HepG2 (cell line): ENCODE measurements at regions of chr2 and their contacts with region 1.

Region 1: DNA sequence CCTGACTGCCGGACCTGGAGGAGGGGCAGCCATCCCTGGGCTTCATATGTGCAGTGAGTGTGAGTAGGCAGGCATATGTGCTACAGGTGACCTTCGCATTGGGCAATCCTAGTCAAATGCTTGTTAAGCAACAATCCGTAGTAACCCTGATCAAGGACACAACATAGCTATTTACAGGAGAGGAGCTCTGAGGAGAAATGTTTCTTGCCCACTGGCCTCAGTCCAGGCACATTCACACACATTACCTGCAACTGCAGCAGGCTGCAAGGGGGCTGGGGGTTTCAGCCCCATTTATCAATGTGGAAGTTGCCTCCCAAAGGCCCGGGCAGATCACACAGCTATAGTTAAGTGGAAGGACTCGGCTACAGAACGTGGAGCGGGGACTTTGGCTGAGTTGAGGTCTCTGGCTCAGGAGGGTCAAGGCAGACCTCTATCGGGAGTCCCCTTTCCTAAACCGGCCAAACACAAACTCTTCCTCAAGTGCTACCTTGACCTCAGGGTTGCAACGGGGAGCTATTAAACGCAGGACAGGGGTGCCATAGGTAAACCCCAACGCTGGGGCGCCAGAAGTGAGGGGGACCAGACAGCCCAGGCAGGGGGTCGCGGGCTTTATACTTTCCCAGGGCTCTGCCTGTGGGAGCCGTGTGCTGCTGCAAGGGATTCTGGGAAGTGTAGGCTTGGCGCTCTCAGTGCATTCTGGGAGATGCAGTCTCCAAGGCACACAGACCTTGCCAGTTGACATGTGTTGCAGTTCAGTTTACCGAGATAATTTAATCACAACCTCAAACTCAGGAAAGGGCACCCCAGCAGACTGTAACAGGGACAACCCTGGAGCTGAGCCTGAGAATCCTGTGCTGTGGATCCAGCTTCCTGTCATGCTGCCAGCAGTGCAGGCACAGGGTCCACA is 9.4 kb downstream of the KHK start:
- DNase-seq: peak; percentile 97
- ATAC-seq: peak; percentile 64
- H3K4me3 ChIP-seq: peak overlapping the region; percentile 33 to 61 (median 35); a peak in 5 of 6 replicates
- H3K27ac ChIP-seq: peak overlapping the region; percentile 97
- H3K4me1 ChIP-seq: peaks cover 62% of the 10 kb centered on the region
- H3K27me3 ChIP-seq: no peaks in the 10 kb centered on the region
- CTCF ChIP-seq: peak; percentile 22
- EP300 ChIP-seq: peak; percentile 88 to 89
- POLR2A ChIP-seq: 0 out of 4 replicates have a peak, but pooled peaks of 1 of the 2 experiments have one; percentile 30
- RAD21 ChIP-seq: peak; percentile 47; the same call in 1 of the 2 replicates

Region 2: GRCh38 chr2:26569216-26570082 is 526.5 kb before region 1 on chr2:
- CTCF ChIA-PET with region 1: no interaction called
- POLR2A ChIA-PET with region 1: no interaction called
- in situ Hi-C with region 1: no loop called
- intact Hi-C with region 1: no loop called
- DNase-seq: no peak
- ATAC-seq: no peak
- H3K4me3 ChIP-seq: no peak overlapping the region
- H3K27ac ChIP-seq: no peak overlapping the region
- H3K4me1 ChIP-seq: no peaks in the 10 kb centered on the region
- H3K27me3 ChIP-seq: peaks cover 12 to 72% of the 10 kb centered on the region in 2 experiments
- CTCF ChIP-seq: no peak
- EP300 ChIP-seq: no peak
- POLR2A ChIP-seq: no peak
- RAD21 ChIP-seq: no peak

Region 3: DNA sequence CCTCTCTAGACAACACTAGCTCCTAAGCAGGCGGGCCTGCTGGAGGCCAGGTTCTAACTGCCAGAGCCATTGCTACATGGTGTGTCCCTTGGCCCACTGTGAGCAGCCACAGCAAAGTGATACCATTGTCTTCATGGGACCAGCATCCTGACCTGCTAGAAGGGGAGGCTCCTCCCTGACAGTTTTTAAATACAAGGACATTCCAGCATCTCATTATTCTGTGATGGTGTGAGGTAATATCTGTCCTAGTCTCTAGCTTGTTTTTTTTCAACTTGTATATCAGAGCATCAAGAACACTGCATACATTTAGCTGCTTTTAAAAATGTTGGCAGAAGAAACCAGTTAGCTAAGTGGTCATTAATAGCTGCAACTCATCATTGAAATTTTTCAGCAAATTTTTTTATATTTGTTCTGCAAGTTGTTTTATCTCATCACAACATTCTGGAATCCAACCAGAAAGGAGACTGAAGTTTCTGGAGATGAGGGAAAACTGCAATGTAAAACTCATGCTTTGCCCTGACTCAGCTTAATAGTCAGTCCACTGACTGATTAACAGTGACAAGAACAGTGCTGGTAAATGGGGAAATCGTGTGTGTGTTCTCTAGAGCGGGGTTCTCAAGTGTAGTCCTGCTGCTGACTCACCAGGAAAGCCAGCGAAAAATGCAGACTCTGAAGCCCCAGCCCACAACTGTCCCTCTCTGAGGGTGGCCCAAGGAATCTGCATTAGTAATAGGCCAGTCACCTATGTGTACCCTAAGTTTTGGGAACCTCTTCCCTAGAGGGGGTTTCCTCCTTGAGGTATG is 107.7 kb before region 1 on chr2:
- CTCF ChIA-PET with region 1: no interaction called
- POLR2A ChIA-PET with region 1: no interaction called
- in situ Hi-C with region 1: no loop called
- intact Hi-C with region 1: no loop called
- DNase-seq: no peak
- ATAC-seq: no peak
- H3K4me3 ChIP-seq: no peak overlapping the region
- H3K27ac ChIP-seq: no peak overlapping the region
- H3K4me1 ChIP-seq: peaks cover 9% of the 10 kb centered on the region
- H3K27me3 ChIP-seq: peaks cover 0 to 14% of the 10 kb centered on the region in 2 experiments; a peak in 1 of 5 replicates
- CTCF ChIP-seq: no peak
- EP300 ChIP-seq: no peak
- POLR2A ChIP-seq: no peak
- RAD21 ChIP-seq: no peak

Region 4: DNA sequence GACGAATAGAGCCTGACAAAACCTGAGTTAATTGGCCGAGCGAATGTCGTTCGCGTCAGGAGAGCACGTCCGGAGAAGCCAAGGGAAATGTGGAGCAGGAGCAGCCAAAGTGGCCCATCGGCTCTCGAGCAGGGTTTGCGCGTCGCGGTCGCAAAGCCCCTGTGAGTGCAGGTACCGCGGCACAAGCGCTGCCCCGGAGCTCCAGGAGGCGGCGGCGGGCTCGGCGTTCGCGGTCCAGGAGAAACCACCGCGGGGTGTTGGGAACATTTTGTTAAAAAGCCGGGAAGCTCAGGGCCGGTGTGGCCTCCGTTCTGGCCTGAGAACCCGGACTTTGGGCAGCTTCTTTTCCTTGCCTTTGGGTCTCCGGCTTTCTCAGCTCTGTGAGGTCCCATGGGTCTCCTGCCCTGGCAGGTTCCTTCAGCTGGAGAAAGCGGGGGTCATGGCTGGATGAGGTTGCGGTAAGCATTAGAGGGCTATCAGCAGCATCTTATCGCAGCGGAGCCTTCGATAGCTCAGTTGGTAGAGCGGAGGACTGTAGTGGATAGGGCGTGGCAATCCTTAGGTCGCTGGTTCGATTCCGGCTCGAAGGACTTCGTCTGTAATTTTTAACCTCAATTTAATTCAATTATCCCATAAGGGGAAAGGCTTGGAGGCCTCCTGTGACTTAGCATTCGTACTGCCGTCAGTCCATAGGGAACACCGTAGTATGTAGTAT is 45.6 kb before region 1 on chr2:
- CTCF ChIA-PET with region 1: no interaction called
- POLR2A ChIA-PET with region 1: interaction called, 32 read pairs
- in situ Hi-C with region 1: no loop called
- intact Hi-C with region 1: no loop called
- DNase-seq: peak; percentile 93
- ATAC-seq: peak; percentile 75
- H3K4me3 ChIP-seq: peak overlapping the region; percentile 86 to 97 (median 91)
- H3K27ac ChIP-seq: peak overlapping the region; percentile 81
- H3K4me1 ChIP-seq: peaks cover 24% of the 10 kb centered on the region
- H3K27me3 ChIP-seq: no peaks in the 10 kb centered on the region; a peak in 1 of 5 replicates
- CTCF ChIP-seq: peak; percentile 49
- EP300 ChIP-seq: no peak
- POLR2A ChIP-seq: peak; percentile 86 to 98
- RAD21 ChIP-seq: peak; percentile 48

Region 5: DNA sequence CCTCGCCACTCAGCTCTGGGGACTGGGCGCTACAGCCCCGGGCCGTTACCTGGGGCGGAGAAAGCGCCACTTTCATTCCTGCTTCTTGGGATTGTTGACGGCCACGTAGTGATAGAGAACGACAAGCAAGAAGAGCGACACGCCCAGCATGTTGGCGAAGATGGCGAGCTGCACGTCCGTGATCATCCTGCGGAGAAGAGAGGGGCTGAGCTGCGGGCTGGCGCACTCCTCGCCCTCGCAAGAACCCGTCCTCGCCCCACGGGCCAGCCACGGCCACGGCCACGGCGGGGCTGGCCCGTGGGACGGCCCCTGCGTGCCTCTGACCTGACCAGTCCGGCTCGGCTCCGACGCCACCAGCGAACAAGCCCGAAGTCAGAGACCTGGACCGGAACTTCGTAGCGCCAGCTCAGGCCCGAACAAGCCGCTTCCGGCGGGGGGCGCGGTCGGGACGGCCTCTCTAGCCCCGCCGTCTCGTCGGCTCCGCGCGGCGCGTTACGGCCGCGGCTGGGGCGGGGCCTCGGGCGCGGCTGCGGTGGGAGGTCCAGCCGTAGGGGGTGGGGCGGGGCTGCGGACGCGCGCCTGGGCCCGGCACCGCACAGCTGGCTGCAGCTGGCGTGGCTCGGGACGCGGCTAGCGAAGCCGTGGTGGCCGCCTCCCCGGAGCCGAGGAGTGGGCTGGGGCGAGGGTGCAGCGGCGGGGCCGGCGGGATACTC is 24.6 kb before region 1 on chr2 and contains the start of gene OST4:
- CTCF ChIA-PET with region 1: no interaction called
- POLR2A ChIA-PET with region 1: interaction called, 49 read pairs
- in situ Hi-C with region 1: no loop called
- intact Hi-C with region 1: no loop called
- DNase-seq: peak; percentile 88
- ATAC-seq: peak; percentile 88
- H3K4me3 ChIP-seq: peak within 1 kb of the TSS; percentile 92 to 99 (median 98)
- H3K27ac ChIP-seq: peak within 1 kb of the TSS; percentile 72
- H3K4me1 ChIP-seq: peaks cover 70% of the 10 kb centered on the region
- H3K27me3 ChIP-seq: peaks cover 0 to 16% of the 10 kb centered on the region in 2 experiments; a peak in 2 of 5 replicates
- CTCF ChIP-seq: peak; percentile 36
- EP300 ChIP-seq: peak in 1 of 2 experiments; percentile 45; a peak in 1 of 4 replicates
- POLR2A ChIP-seq: peak; percentile 93 to 97
- RAD21 ChIP-seq: peak; percentile 52
- total RNA-seq, gene OST4: 498 and 508 TPM in 2 replicates

Region 6: DNA sequence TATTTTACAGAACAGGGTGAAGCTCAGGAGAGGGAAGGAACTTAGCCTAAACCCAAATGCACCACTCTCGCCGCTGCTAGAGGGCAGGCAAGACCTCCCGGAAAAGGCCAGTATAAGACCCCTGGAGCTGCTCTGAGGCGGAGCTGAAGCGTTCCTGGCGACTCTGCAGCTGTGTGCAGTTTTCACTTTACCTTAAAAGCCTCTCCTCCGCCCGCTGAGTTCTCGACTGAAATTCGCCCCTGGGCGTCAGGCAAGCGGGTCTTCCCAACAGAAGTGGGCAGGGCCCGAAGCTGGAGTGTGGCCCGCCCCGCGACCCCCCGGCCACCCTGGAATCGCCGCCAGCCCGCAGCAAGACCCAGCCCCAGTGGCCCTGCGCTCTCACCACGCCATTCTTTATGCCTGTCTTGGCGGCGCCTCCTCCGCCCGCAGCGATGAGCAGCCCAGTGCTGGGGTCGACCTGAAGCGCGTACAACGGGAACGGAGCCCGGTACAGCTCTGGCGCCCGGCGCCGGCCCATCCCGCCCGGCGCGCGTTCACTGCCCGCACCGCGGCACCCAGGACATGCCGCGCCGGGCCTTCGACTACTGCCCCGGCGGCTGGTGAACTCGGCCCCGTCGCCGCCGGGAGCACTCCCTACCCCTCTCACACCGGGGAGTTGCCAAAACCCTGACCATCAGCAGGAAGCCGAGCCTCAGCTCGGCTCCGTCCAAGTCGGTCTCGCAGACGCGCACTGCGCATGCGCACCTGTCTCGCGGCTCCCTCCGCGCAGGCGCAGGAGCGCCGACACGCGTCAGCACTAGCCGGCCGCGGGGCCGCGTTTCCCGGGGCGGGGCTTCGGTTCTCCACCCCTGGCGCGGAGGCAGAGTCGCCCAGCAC is 38.1 kb after region 1 on chr2 and contains the start of gene PREB:
- CTCF ChIA-PET with region 1: no interaction called
- POLR2A ChIA-PET with region 1: interaction called, 34 read pairs
- in situ Hi-C with region 1: no loop called
- intact Hi-C with region 1: no loop called
- DNase-seq: peak; percentile 91
- ATAC-seq: peak; percentile 83
- H3K4me3 ChIP-seq: peak within 1 kb of the TSS; percentile 92 to 100 (median 96)
- H3K27ac ChIP-seq: peak within 1 kb of the TSS; percentile 72
- H3K4me1 ChIP-seq: peaks cover 52% of the 10 kb centered on the region
- H3K27me3 ChIP-seq: peaks cover 6 to 14% of the 10 kb centered on the region in 2 experiments; a peak in 3 of 5 replicates
- CTCF ChIP-seq: peak; percentile 34
- EP300 ChIP-seq: 0 out of 4 replicates have a peak, but pooled peaks have one; percentile 7 to 26
- POLR2A ChIP-seq: peak; percentile 85 to 97
- RAD21 ChIP-seq: peak; percentile 55
- total RNA-seq, gene PREB: 112 and 119 TPM in 2 replicates

Region 7: GRCh38 chr2:27191053-27191829 is 95.2 kb after region 1 on chr2:
- CTCF ChIA-PET with region 1: interaction called, 43 read pairs
- POLR2A ChIA-PET with region 1: interaction called, 11 read pairs
- in situ Hi-C with region 1: loop called (anchors 5 kb)
- intact Hi-C with region 1: loop called (anchors 1 kb)
- DNase-seq: peak; percentile 87
- ATAC-seq: peak; percentile 93
- H3K4me3 ChIP-seq: no peak overlapping the region
- H3K27ac ChIP-seq: peak overlapping the region; percentile 7
- H3K4me1 ChIP-seq: peaks cover 43% of the 10 kb centered on the region
- H3K27me3 ChIP-seq: no peaks in the 10 kb centered on the region
- CTCF ChIP-seq: peak; percentile 93
- EP300 ChIP-seq: peak in 1 of 2 experiments; percentile 25; a peak in 1 of 4 replicates
- POLR2A ChIP-seq: no peak
- RAD21 ChIP-seq: peak; percentile 97

Region 8: GRCh38 chr2:27241761-27242613 is 146.0 kb after region 1 on chr2:
- CTCF ChIA-PET with region 1: no interaction called
- POLR2A ChIA-PET with region 1: no interaction called
- in situ Hi-C with region 1: no loop called
- intact Hi-C with region 1: no loop called
- DNase-seq: no peak
- ATAC-seq: no peak
- H3K4me3 ChIP-seq: no peak overlapping the region
- H3K27ac ChIP-seq: no peak overlapping the region
- H3K4me1 ChIP-seq: no peaks in the 10 kb centered on the region
- H3K27me3 ChIP-seq: no peaks in the 10 kb centered on the region
- CTCF ChIP-seq: no peak
- EP300 ChIP-seq: no peak
- POLR2A ChIP-seq: no peak
- RAD21 ChIP-seq: no peak

Region 9: GRCh38 chr2:27281855-27282559 is 186.0 kb after region 1 on chr2 and contains the start of gene TRIM54:
- CTCF ChIA-PET with region 1: interaction called, 5 read pairs
- POLR2A ChIA-PET with region 1: interaction called, 3 read pairs
- in situ Hi-C with region 1: loop called (anchors 5 kb)
- intact Hi-C with region 1: no loop called
- DNase-seq: no peak
- ATAC-seq: peak; percentile 60
- H3K4me3 ChIP-seq: peak within 1 kb of the TSS in 1 of 3 experiments; percentile 26; a peak in 2 of 6 replicates
- H3K27ac ChIP-seq: no peak within 1 kb of the TSS
- H3K4me1 ChIP-seq: peaks cover 41% of the 10 kb centered on the region
- H3K27me3 ChIP-seq: peaks cover 0 to 18% of the 10 kb centered on the region in 2 experiments; a peak in 4 of 5 replicates
- CTCF ChIP-seq: no peak
- EP300 ChIP-seq: no peak
- POLR2A ChIP-seq: no peak
- RAD21 ChIP-seq: no peak
- total RNA-seq, gene TRIM54: 0.07 TPM in 1 of 2 replicates, not detected in the other